ENCODE measurements at regions of chr16 and their contacts with region 1.

Region 1: GRCh38 chr16:25060920-25061319 is 45.8 kb upstream of the ARHGAP17 start:
- DNase-seq: no peak
- ATAC-seq: no peak
- H3K4me3 ChIP-seq: no peak overlapping the region
- H3K27ac ChIP-seq: no peak overlapping the region
- H3K4me1 ChIP-seq: no peaks in the 10 kb centered on the region
- H3K27me3 ChIP-seq: no peaks in the 10 kb centered on the region
- CTCF ChIP-seq: no peak

Region 2: GRCh38 chr16:24896439-24896838 is 164.5 kb before region 1 on chr16:
- CTCF ChIA-PET with region 1: interaction called, 12 read pairs
- POLR2A ChIA-PET with region 1: no interaction called
- intact Hi-C with region 1: no loop called
- DNase-seq: no peak
- ATAC-seq: no peak
- H3K4me3 ChIP-seq: no peak overlapping the region
- H3K27ac ChIP-seq: no peak overlapping the region
- H3K4me1 ChIP-seq: no peaks in the 10 kb centered on the region
- H3K27me3 ChIP-seq: no peaks in the 10 kb centered on the region
- CTCF ChIP-seq: no peak

Region 3: GRCh38 chr16:25073854-25074253 is 12.9 kb after region 1 on chr16:
- CTCF ChIA-PET with region 1: no interaction called
- POLR2A ChIA-PET with region 1: no interaction called
- intact Hi-C with region 1: no loop called
- DNase-seq: no peak
- ATAC-seq: no peak
- H3K4me3 ChIP-seq: no peak overlapping the region
- H3K27ac ChIP-seq: no peak overlapping the region
- H3K4me1 ChIP-seq: no peaks in the 10 kb centered on the region
- H3K27me3 ChIP-seq: no peaks in the 10 kb centered on the region
- CTCF ChIP-seq: no peak

Region 4: GRCh38 chr16:25257956-25258823 is 197.3 kb after region 1 on chr16:
- CTCF ChIA-PET with region 1: no interaction called
- POLR2A ChIA-PET with region 1: no interaction called
- intact Hi-C with region 1: no loop called
- DNase-seq: peak; percentile 63
- ATAC-seq: peak; percentile 32
- H3K4me3 ChIP-seq: peak overlapping the region; percentile 87
- H3K27ac ChIP-seq: peak overlapping the region; percentile 91
- H3K4me1 ChIP-seq: peaks cover 11% of the 10 kb centered on the region
- H3K27me3 ChIP-seq: no peaks in the 10 kb centered on the region
- CTCF ChIP-seq: no peak

Measured in PC-3 (cell line).